Activated CD4-positive, alpha-beta T cell treated with anti-CD3 and anti-CD28 coated beads for 36 hours (primary cell): ENCODE measurements at regions of chr2 and their contacts with region 1.

Region 1: GRCh38 chr2:42169100-42169873 is at the start of gene EML4:
- DNase-seq: peak; percentile 95
- ATAC-seq: peak; percentile 81
- H3K4me3 Mint-ChIP-seq: no peak within 1 kb of the TSS
- H3K27ac Mint-ChIP-seq: peak within 1 kb of the TSS; percentile 86
- H3K4me1 Mint-ChIP-seq: peaks cover 21% of the 10 kb centered on the region
- H3K27me3 Mint-ChIP-seq: no peaks in the 10 kb centered on the region
- total RNA-seq, gene EML4: 72.1 to 74.1 TPM

Region 2: GRCh38 chr2:41840702-41841551 is 328.4 kb before region 1 on chr2:
- CTCF ChIA-PET with region 1: no interaction called
- POLR2A ChIA-PET with region 1: no interaction called
- intact Hi-C with region 1: loop called (anchors 1 kb)
- DNase-seq: peak; percentile 99
- ATAC-seq: peak; percentile 100
- H3K4me3 Mint-ChIP-seq: peak overlapping the region; percentile 84
- H3K27ac Mint-ChIP-seq: peak overlapping the region; percentile 92
- H3K4me1 Mint-ChIP-seq: peaks cover 10% of the 10 kb centered on the region
- H3K27me3 Mint-ChIP-seq: peaks cover 16% of the 10 kb centered on the region

Region 3: GRCh38 chr2:42102024-42102590 is 67.2 kb before region 1 on chr2:
- CTCF ChIA-PET with region 1: interaction called, 5 read pairs
- POLR2A ChIA-PET with region 1: no interaction called
- intact Hi-C with region 1: loop called (anchors 1 to 2 kb)
- DNase-seq: peak; percentile 89
- ATAC-seq: peak; percentile 40
- H3K4me3 Mint-ChIP-seq: peak overlapping the region; percentile 69
- H3K27ac Mint-ChIP-seq: peak overlapping the region; percentile 94
- H3K4me1 Mint-ChIP-seq: peaks cover 38% of the 10 kb centered on the region
- H3K27me3 Mint-ChIP-seq: no peaks in the 10 kb centered on the region

Region 4: DNA sequence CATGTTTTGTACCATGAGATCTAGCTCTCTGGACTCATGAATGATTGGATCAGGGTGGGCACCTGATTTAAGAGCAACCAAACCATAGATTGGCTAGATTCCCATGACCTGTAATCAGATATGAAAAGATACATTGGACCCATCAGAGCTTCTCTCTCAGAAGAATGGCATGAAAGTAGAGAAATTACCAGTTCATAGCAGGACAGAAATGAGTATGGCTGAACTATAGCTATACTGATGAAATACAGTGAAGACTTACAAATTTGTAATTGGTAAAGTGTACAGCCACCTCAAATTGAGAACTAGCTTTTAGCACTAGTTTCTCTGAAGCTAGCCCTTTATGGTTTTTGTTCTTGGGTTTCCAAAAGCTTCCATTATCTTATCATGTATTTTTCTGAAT is 19.1 kb before region 1 on chr2:
- CTCF ChIA-PET with region 1: interaction called, 4 read pairs
- POLR2A ChIA-PET with region 1: no interaction called
- intact Hi-C with region 1: loop called in 1 of 2 experiments (anchors 2 kb)
- DNase-seq: no peak
- ATAC-seq: peak; percentile 86
- H3K4me3 Mint-ChIP-seq: no peak overlapping the region
- H3K27ac Mint-ChIP-seq: peak overlapping the region; percentile 16
- H3K4me1 Mint-ChIP-seq: peaks cover 5% of the 10 kb centered on the region
- H3K27me3 Mint-ChIP-seq: no peaks in the 10 kb centered on the region

Region 5: DNA sequence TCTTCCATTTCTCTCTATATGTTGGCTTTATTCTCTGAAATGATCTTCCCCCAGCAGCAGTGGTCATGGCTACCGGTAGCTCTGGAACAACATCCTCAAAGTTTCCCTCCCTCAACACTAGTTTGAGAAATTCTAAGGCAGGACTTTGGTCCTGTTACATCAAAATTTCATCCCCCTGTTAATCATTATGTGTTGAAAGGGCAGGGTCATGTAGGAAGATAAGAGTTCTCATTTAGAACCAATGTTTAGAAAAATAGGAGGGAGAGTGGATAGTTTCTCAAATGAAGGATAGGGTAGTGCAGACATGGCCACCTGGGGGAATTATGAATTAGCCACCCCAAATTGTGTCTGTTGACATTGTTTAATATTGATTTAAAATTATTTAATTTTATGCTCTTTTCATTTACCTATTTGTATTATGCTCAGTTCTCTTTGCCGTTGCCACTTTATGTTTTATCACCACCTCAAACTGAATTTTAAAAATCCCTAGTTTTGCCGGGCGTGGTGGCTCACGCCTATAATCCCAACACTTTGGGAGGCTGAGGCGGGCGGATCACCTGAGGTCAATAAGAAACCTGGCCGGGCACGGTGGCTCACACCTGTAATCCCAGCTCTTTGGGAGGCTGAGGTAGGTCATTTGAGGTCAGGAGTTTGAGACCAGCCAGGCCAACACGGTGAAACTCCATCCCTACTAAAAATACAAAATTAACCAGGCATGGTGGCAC is 22.2 kb after region 1 on chr2:
- CTCF ChIA-PET with region 1: interaction called, 6 read pairs
- POLR2A ChIA-PET with region 1: no interaction called
- intact Hi-C with region 1: loop called (anchors 2 kb)
- DNase-seq: no peak
- ATAC-seq: no peak
- H3K4me3 Mint-ChIP-seq: no peak overlapping the region
- H3K27ac Mint-ChIP-seq: peak overlapping the region; percentile 24
- H3K4me1 Mint-ChIP-seq: peaks cover 73% of the 10 kb centered on the region
- H3K27me3 Mint-ChIP-seq: no peaks in the 10 kb centered on the region

Region 6: GRCh38 chr2:42216712-42217111 is 47.4 kb after region 1 on chr2:
- CTCF ChIA-PET with region 1: no interaction called
- POLR2A ChIA-PET with region 1: no interaction called
- intact Hi-C with region 1: no loop called
- DNase-seq: no peak
- ATAC-seq: no peak
- H3K4me3 Mint-ChIP-seq: no peak overlapping the region
- H3K27ac Mint-ChIP-seq: peak overlapping the region; percentile 28
- H3K4me1 Mint-ChIP-seq: peaks cover 67% of the 10 kb centered on the region
- H3K27me3 Mint-ChIP-seq: no peaks in the 10 kb centered on the region

Region 7: GRCh38 chr2:42238644-42239288 is 69.5 kb after region 1 on chr2:
- CTCF ChIA-PET with region 1: no interaction called
- POLR2A ChIA-PET with region 1: no interaction called
- intact Hi-C with region 1: loop called in 1 of 2 experiments (anchors 5 kb)
- DNase-seq: peak; percentile 66
- ATAC-seq: peak; percentile 91
- H3K4me3 Mint-ChIP-seq: no peak overlapping the region
- H3K27ac Mint-ChIP-seq: no peak overlapping the region
- H3K4me1 Mint-ChIP-seq: peaks cover 79% of the 10 kb centered on the region
- H3K27me3 Mint-ChIP-seq: no peaks in the 10 kb centered on the region

Region 8: DNA sequence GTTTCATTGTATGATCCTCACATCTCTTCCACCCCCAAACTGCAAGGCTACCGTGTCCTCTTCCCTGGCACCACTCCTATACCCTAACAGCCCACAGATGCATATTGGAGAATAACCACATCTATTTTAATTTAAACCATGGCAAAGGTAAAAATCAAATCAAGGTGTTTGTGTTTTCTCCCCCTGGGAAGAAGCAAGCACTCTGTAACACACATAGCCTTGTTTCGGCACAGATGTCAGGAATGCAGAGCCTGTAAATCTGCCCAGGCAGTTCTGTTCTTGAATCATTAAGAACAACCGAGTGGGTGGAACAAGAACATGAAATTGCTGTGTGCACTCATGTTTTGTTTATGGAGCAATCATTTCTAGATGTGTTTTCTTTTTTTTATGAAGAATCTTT is 198.5 kb after region 1 on chr2:
- CTCF ChIA-PET with region 1: no interaction called
- POLR2A ChIA-PET with region 1: no interaction called
- intact Hi-C with region 1: no loop called
- DNase-seq: no peak
- ATAC-seq: no peak
- H3K4me3 Mint-ChIP-seq: no peak overlapping the region
- H3K27ac Mint-ChIP-seq: no peak overlapping the region
- H3K4me1 Mint-ChIP-seq: peaks cover 12% of the 10 kb centered on the region
- H3K27me3 Mint-ChIP-seq: no peaks in the 10 kb centered on the region